A673 (cell line): ENCODE measurements at regions of chr2 and their contacts with region 1.

Region 1: GRCh38 chr2:27281855-27282559 is at the start of gene TRIM54:
- DNase-seq: peak; percentile 43
- H3K4me3 ChIP-seq: no peak within 1 kb of the TSS
- H3K27ac ChIP-seq: no peak within 1 kb of the TSS
- H3K4me1 ChIP-seq: peaks cover 16% of the 10 kb centered on the region
- H3K27me3 ChIP-seq: no peaks in the 10 kb centered on the region
- CTCF ChIP-seq: no peak
- total RNA-seq, gene TRIM54: 2.2 and 2.8 TPM in 2 replicates

Region 2: GRCh38 chr2:26964446-26965130 is 317.4 kb before region 1 on chr2:
- CTCF ChIA-PET with region 1: interaction called, 7 read pairs
- POLR2A ChIA-PET with region 1: no interaction called
- intact Hi-C with region 1: loop called (anchors 5 kb)
- DNase-seq: no peak
- H3K4me3 ChIP-seq: no peak overlapping the region
- H3K27ac ChIP-seq: no peak overlapping the region
- H3K4me1 ChIP-seq: no peaks in the 10 kb centered on the region
- H3K27me3 ChIP-seq: peaks cover 14% of the 10 kb centered on the region
- CTCF ChIP-seq: no peak